Natural killer cell (primary cell): ENCODE measurements at regions of chr2 and their contacts with region 1.

Region 1: GRCh38 chr2:128178650-128179460 is 87.9 kb downstream of the UGGT1 start:
- DNase-seq: peak; percentile 35 to 70
- ATAC-seq: peak; percentile 70 to 82 (median 82)
- H3K4me3 ChIP-seq: no peak overlapping the region
- H3K4me3 Mint-ChIP-seq: no peak overlapping the region
- H3K27ac ChIP-seq: no peak overlapping the region
- H3K27ac Mint-ChIP-seq: peak overlapping the region in 1 of 2 donors; percentile 11
- H3K4me1 ChIP-seq: no peaks in the 10 kb centered on the region
- H3K4me1 Mint-ChIP-seq: peaks cover 0 to 5% of the 10 kb centered on the region in 2 donors
- H3K27me3 ChIP-seq: no peaks in the 10 kb centered on the region
- H3K27me3 Mint-ChIP-seq: no peaks in the 10 kb centered on the region
- CTCF ChIP-seq: peak; percentile 64

Region 2: GRCh38 chr2:128325611-128326181 is 146.8 kb after region 1 on chr2:
- intact Hi-C with region 1: no loop called
- DNase-seq: peak in 1 of 2 donors; percentile 13
- ATAC-seq: no peak
- H3K4me3 ChIP-seq: no peak overlapping the region
- H3K4me3 Mint-ChIP-seq: no peak overlapping the region
- H3K27ac ChIP-seq: no peak overlapping the region
- H3K27ac Mint-ChIP-seq: no peak overlapping the region
- H3K4me1 ChIP-seq: peaks cover 11% of the 10 kb centered on the region
- H3K4me1 Mint-ChIP-seq: peaks cover 12 to 14% of the 10 kb centered on the region in 2 donors
- H3K27me3 ChIP-seq: no peaks in the 10 kb centered on the region
- H3K27me3 Mint-ChIP-seq: peaks cover 5 to 7% of the 10 kb centered on the region in 2 donors
- CTCF ChIP-seq: no peak

Region 3: DNA sequence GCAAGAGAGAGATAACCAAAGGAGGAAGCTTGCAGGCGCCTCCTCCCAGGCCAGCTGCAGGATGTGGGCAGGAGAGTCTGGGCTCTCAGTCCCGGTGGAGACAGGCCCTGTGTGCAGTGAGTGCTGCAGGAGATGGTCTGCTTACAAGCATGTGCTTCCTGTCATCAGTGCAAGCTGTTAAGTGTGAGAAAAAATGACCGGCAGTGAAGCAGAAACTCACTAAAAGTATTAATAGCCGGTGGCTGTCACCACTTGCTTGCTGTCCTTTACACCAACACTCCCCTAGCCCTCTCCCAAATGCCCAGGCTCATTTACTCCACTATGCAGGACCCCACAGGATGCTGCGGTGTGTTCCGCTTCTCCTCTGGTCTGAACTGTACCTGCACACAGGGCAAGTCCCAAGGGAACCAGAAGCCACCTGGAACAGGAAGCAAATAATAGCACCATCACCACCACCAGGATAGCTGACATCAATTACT is 575.4 kb after region 1 on chr2:
- intact Hi-C with region 1: loop called (anchors 10 kb)
- DNase-seq: peak in 1 of 2 donors; percentile 18
- ATAC-seq: peak; percentile 18 to 86 (median 60)
- H3K4me3 ChIP-seq: no peak overlapping the region
- H3K4me3 Mint-ChIP-seq: peak overlapping the region; percentile 79
- H3K27ac ChIP-seq: no peak overlapping the region
- H3K27ac Mint-ChIP-seq: peak overlapping the region; percentile 17 to 51
- H3K4me1 ChIP-seq: peaks cover 23% of the 10 kb centered on the region
- H3K4me1 Mint-ChIP-seq: peaks cover 24 to 30% of the 10 kb centered on the region in 2 donors
- H3K27me3 ChIP-seq: no peaks in the 10 kb centered on the region
- H3K27me3 Mint-ChIP-seq: no peaks in the 10 kb centered on the region
- CTCF ChIP-seq: no peak